Posterior vena cava (tissue), 2 donors: ENCODE measurements at regions of chr1 and their contacts with region 1.

Region 1: DNA sequence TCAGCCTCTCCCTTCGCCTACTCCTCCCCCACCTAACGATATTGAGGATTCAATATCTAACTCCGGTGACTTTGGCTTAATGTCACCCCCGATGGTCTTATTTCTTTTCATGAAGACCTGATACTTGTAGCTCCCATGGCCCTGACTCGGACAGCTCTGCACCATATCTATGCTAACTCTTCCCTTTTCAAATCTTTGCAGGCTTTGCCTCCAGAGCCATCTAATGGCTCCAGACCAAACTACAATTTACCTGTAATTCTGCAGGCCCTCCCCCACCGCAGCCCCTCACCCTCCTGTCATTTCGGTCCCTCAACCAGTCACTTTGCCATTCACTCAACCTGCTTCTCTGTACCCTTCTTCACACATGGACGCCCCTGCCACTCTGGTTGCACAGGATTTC is 7.9 kb upstream of the GSTM5 start:
- DNase-seq: no peak

Region 2: DNA sequence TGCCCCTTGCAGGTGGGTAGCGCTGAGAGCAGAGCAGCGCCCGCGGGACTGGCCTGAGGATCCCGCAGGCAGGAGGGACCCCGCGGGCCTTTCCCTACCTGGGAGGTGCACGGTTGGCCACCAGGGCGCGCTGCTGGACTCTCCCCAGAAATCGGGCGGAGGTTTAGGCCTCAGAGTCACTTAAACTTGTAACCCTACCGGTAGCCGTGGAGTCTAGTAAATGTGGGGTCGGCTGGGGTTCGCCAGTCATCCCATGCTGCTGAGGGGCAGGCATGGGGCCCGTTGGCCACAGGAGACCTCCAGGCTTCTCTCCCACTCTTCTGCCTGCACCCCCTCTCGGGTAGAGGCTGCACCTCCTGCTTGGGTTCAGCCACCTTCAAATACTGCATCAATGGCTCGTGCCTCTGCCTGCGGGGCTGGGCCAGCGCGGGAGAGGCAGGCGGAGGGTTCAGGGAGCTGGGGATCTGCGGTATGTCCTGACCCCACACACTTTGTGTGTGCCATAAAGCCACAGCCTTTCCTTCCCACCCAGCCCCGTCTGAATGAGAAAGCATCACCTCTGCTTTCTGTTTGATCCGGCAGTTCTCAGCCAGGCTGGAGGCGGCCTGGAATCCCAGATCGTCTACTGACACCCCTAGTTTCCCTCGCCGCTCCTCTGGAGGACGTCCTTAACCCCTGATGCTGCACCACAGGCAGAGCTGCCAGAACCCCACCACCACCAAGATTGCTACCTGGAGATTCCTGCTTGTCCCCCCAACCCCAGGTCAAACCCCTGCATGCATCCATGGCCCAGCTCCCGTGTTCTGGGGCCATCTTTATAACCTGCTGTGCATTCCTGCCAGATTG is 60.6 kb before region 1 on chr1:
- intact Hi-C with region 1: loop called in 1 of 2 experiments (anchors 10 kb)
- DNase-seq: peak; percentile 94